Activated B cell treated with CpG ODN at 0.5 μM for 24 hours (primary cell): ENCODE measurements at regions of chr19 and their contacts with region 1.

Region 1: GRCh38 chr19:12564016-12564664 is 12.9 kb upstream of the ZNF564 start:
- DNase-seq: peak; percentile 91
- ATAC-seq: peak; percentile 100
- H3K4me3 Mint-ChIP-seq: no peak overlapping the region
- H3K27ac Mint-ChIP-seq: no peak overlapping the region
- H3K4me1 Mint-ChIP-seq: peaks cover 6% of the 10 kb centered on the region
- H3K27me3 Mint-ChIP-seq: no peaks in the 10 kb centered on the region
- CTCF ChIP-seq: no peak

Region 2: DNA sequence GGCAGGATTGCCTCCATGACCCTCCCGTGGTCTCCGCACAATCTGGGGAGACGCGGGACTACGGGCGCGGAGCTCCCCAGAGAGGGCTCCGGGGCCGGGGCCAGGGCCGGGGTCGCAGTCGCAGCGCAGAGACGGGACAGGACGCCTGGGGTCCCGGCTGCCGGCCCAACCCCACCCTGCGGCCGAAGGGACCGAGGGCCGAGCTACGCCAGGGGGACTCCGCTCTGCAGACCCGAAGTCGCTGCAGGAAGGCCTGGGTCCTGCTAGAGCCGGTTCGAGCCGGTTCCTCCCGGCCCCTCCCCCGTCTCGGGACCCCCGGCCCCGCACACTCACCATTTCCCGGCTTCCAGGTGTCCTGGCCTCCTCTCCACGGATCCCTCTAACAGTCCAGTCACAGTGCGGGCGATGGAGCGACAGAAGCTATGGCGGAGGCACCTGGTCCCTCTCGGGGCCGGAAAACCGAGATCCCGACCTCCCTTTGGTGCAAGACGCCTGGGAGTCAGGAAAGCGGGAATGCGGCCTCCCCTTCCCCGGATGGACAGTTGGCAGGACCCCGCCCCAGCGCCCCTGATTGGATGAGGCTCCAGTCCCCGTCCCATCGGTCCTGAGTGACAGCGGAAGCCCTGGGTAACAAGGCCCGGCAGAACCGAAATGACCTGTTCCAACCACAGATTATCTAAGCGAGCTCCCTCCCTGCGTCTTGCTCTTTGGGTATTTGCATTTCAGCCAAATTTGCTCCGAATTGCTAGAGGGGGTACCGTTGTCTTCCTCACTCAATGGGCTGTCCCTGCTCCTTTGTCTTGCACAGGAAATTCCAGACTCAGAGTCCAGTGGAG is 407.7 kb before region 1 on chr19 and contains the start of gene ZNF625:
- CTCF ChIA-PET with region 1: no interaction called
- POLR2A ChIA-PET with region 1: no interaction called
- intact Hi-C with region 1: no loop called
- DNase-seq: peak; percentile 46
- ATAC-seq: peak; percentile 90
- H3K4me3 Mint-ChIP-seq: peak within 1 kb of the TSS; percentile 92
- H3K27ac Mint-ChIP-seq: peak within 1 kb of the TSS; percentile 82
- H3K4me1 Mint-ChIP-seq: peaks cover 12% of the 10 kb centered on the region
- H3K27me3 Mint-ChIP-seq: no peaks in the 10 kb centered on the region
- CTCF ChIP-seq: no peak
- total RNA-seq, gene ZNF625: 6.5 and 8.1 TPM in 2 replicates

Region 3: GRCh38 chr19:12580163-12580694 is 16.1 kb after region 1 on chr19:
- CTCF ChIA-PET with region 1: no interaction called
- POLR2A ChIA-PET with region 1: interaction called, 16 read pairs
- intact Hi-C with region 1: no loop called
- DNase-seq: no peak
- ATAC-seq: no peak
- H3K4me3 Mint-ChIP-seq: no peak overlapping the region
- H3K27ac Mint-ChIP-seq: no peak overlapping the region
- H3K4me1 Mint-ChIP-seq: peaks cover 10% of the 10 kb centered on the region
- H3K27me3 Mint-ChIP-seq: no peaks in the 10 kb centered on the region
- CTCF ChIP-seq: no peak

Region 4: DNA sequence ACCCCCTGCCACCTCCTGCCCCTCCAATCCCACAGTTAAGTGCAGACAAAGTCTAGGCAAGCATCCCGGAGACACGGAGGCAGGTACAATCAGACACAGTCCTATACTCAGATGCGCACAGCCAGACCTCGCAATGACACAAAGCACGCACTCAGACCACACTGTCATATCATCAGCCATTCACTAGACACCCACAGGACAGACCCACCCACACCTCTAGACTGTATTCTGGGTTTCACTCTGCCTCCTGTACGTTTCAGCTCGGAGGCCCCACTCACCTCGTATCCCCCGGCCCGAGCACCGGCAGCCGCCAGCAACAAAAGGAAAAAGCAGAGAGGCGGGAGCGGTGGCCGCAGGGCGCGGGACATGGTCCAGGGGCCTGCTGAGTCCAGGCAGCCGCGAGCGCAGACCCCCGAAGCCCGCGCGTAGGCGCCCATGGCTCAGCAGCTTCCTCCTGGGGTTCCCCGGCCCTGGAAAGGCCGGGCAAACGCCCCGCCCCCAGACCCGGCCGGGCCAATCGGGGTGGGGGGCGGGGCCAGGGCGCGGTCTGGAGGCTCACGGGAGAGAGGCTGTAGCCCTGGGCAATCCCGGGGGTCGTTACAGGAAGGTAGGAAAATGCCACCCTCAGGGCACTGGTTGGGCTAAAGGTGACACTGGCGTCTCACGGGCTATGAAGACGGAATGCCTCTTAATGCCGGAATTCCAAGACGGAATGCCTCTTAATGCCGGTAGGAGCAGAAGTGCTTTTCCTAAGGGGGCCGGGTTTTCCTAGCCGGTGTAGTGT is 102.3 kb after region 1 on chr19 and contains the starts of genes MAN2B1 and WDR83:
- CTCF ChIA-PET with region 1: interaction called, 67 read pairs
- POLR2A ChIA-PET with region 1: interaction called, 7 read pairs
- intact Hi-C with region 1: loop called (anchors 2 kb)
- DNase-seq: peak; percentile 83
- ATAC-seq: peak; percentile 70
- H3K4me3 Mint-ChIP-seq: peak within 1 kb of the TSS; percentile 97
- H3K27ac Mint-ChIP-seq: peak within 1 kb of the TSS; percentile 93
- H3K4me1 Mint-ChIP-seq: peaks cover 69% of the 10 kb centered on the region
- H3K27me3 Mint-ChIP-seq: no peaks in the 10 kb centered on the region
- CTCF ChIP-seq: no peak
- total RNA-seq, gene MAN2B1: 251 and 291 TPM in 2 replicates
- total RNA-seq, gene WDR83: 17.7 and 20.8 TPM in 2 replicates

Region 5: DNA sequence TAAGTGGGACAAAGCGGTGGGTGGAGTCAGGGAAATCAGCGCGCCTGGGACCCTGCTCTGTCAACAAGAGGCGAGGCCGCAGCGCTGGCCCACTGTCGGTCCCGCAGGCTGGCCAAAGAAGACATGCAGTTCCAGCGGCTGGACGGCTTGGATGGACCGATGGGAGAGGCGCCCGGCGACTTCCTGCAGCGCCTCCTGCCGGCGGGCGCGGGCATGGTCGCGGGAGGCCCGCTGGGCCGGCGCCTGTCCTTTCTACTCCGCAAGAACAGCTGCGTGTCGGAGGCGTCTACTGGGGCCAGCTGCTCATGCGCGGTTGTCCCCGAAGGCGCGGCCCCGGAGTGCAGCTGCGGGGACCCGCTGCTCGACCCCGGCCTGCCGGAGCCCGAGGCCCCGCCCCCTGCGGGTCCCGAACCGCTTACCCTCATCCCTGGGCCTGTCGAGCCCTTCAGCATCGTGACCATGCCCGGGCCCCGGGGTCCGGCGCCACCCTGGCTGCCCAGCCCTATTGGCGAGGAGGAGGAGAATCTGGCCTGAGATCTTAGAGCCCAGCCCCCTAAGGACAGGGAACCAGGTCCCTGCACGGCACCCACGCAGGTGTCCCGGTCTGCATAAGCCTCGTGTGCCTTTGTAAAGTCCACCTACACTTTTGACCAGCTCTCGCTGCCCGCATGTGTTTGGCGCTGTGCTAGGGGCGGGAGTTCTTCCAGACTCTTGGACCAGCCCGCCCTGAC is 193.6 kb after region 1 on chr19:
- CTCF ChIA-PET with region 1: no interaction called
- POLR2A ChIA-PET with region 1: no interaction called
- intact Hi-C with region 1: loop called (anchors 1 kb)
- DNase-seq: peak; percentile 69
- ATAC-seq: peak; percentile 75
- H3K4me3 Mint-ChIP-seq: no peak overlapping the region
- H3K27ac Mint-ChIP-seq: no peak overlapping the region
- H3K4me1 Mint-ChIP-seq: peaks cover 10% of the 10 kb centered on the region
- H3K27me3 Mint-ChIP-seq: peaks cover 22% of the 10 kb centered on the region
- CTCF ChIP-seq: peak; percentile 70

Region 6: GRCh38 chr19:12847159-12848139 is 283.3 kb after region 1 on chr19:
- CTCF ChIA-PET with region 1: no interaction called
- POLR2A ChIA-PET with region 1: no interaction called
- intact Hi-C with region 1: loop called (anchors 5 kb)
- DNase-seq: peak; percentile 92
- ATAC-seq: peak; percentile 99
- H3K4me3 Mint-ChIP-seq: no peak overlapping the region
- H3K27ac Mint-ChIP-seq: no peak overlapping the region
- H3K4me1 Mint-ChIP-seq: peaks cover 7% of the 10 kb centered on the region
- H3K27me3 Mint-ChIP-seq: peaks cover 20% of the 10 kb centered on the region
- CTCF ChIP-seq: peak; percentile 86